ENCODE measurements at regions of chr19 and their contacts with region 1.

Region 1: GRCh38 chr19:38647368-38647965 is at the start of gene ACTN4:
- DNase-seq: peak; percentile 97 to 99 (median 98)
- ATAC-seq: peak; percentile 88
- H3K4me3 ChIP-seq: peak within 1 kb of the TSS; percentile 99
- H3K27ac ChIP-seq: peak within 1 kb of the TSS; percentile 83
- H3K4me1 ChIP-seq: peaks cover 27 to 34% of the 10 kb centered on the region in 2 experiments; a peak in 4 of 5 replicates
- H3K27me3 ChIP-seq: no peaks in the 10 kb centered on the region
- CTCF ChIP-seq: no peak
- EP300 ChIP-seq: no peak
- POLR2A ChIP-seq: peak; percentile 93
- RAD21 ChIP-seq: peak in 1 of 2 experiments; percentile 18; a peak in 2 of 4 replicates
- polyA plus RNA-seq, gene ACTN4: 3.1 to 8.4 TPM

Region 2: DNA sequence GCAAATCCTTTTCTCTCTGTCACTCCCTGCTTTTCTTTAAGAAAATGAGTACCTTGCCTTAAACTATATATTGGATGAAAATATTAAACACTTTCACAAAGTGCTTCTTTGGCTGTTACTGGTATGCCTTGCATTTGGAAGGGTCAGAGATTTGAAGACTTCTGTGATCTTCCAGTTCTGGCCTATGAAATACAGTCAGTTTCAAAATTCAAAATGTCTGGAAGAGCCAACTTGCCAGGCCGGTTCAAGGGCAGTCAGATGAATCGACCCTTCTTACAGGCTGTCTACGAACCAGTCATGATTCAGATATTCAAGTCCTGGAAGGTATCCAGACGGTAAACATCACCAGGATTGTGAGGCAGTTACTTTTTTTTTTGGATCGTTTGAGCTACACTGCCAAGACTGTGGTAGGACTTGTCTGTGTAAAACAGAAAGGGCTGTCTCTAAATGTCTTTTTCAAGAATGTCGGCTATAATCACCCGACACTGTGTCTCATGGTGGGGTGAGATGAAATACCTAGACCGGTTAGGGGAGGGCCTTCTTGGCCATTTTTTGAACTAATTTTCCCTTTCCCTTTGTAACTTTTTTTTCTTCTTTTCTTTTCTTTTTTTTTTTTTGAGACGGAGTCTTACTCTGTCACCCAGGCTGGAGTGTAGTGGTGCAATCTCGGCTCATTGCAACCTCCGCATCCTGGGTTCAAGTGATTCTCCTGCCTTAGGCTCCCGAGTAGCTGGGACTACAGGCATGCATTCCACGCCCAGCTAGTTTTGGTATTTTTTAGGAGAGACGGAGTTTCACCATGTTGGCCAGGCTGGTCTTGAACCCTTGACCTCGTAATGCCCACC is 11.2 kb after region 1 on chr19:
- CTCF ChIA-PET with region 1: no interaction called
- POLR2A ChIA-PET with region 1: interaction called, 17 read pairs
- in situ Hi-C with region 1: no loop called
- intact Hi-C with region 1: no loop called
- DNase-seq: no peak
- ATAC-seq: peak; percentile 21; the same call in 1 of the 3 replicates
- H3K4me3 ChIP-seq: no peak overlapping the region
- H3K27ac ChIP-seq: peak overlapping the region; percentile 31; the same call in 2 of the 3 replicates
- H3K4me1 ChIP-seq: peaks cover 14 to 56% of the 10 kb centered on the region in 2 experiments
- H3K27me3 ChIP-seq: no peaks in the 10 kb centered on the region
- CTCF ChIP-seq: no peak
- EP300 ChIP-seq: no peak
- POLR2A ChIP-seq: no peak
- RAD21 ChIP-seq: no peak

Region 3: DNA sequence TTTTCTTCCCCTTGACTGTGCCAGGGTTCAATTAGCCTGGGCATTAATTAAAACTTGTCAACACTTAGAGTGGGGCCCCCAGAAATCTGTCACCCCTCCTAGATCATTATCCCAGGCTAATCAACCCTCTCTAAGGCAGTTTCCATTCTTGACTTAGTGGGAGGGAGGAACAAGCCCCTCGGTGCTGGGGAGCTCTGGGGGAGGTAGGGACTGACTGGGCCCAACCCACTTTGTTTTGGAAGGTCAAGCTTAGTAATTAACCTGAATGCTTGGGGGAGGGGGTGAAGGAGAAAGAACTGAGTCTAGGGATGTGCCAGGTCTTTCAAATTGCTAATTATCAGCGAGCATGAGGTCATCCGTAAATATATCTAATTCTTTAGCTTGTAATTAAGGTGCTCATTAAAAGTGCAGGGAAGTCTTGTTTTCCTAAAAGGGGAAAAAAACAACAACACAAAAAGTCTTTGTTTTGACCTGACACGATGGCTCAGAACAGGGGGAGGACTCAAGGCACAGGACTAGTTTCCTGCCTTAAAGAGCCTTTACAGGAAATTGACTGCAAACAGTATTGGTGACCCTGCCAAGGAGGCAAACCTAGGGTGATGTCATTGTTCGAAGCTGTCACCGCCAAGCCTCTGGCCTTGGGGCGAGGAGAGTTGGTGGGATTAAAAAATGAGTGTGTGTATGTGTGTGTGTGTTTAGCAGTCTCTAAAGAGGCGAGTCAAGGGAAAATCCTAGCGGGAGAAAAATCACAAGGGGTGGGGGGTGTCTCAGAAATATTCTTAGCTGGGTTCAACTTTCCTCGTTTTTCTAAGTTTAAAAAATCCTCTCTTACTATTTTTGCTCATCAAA is 19.4 kb after region 1 on chr19:
- CTCF ChIA-PET with region 1: no interaction called
- POLR2A ChIA-PET with region 1: interaction called, 20 read pairs
- in situ Hi-C with region 1: no loop called
- intact Hi-C with region 1: no loop called
- DNase-seq: no peak
- ATAC-seq: no peak
- H3K4me3 ChIP-seq: no peak overlapping the region
- H3K27ac ChIP-seq: peak overlapping the region; percentile 35
- H3K4me1 ChIP-seq: peaks cover 61 to 90% of the 10 kb centered on the region in 2 experiments
- H3K27me3 ChIP-seq: no peaks in the 10 kb centered on the region
- CTCF ChIP-seq: no peak
- EP300 ChIP-seq: no peak
- POLR2A ChIP-seq: no peak
- RAD21 ChIP-seq: no peak

Region 4: DNA sequence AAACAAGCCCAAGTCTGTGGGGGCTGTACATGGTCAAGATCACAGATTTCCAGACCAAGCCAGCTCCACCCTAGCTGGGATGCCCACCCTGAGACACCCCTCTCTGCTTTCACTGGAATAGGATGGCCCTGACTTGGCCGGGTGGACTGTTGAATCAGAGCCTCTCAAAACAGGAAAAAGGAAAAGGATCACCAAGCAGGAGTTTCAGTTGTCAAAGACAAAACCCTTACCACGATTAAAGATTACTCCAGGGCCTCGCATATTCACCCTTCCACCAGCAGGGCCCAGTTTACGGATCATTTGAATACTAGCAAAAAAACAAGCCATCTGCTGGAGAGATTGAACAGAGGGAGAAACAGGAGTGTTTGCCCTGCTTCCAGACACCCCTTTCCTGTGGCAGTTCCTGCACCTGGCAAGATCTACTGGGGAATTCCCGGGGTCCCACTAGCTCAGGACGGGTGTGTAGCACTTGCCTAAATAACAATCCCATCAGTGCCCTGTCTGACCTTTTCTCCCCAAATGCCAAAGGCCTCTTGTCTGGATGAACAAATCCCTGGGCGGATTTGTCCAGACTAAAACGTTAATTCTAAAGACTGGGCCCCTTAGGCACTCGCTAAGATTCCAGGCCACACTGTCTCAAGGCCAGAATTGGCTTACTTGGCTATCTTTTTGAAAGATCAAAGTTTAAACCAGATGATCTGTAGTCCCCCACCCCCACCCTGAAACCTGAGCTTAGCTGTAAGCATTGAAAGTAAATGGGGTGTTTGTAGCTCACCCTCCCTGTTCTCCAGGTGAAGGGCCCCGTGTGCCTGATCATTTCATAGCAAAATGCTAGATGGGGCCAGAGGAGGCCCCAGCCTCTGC is 38.4 kb after region 1 on chr19:
- CTCF ChIA-PET with region 1: no interaction called
- POLR2A ChIA-PET with region 1: no interaction called
- in situ Hi-C with region 1: no loop called
- intact Hi-C with region 1: loop called (anchors 5 kb)
- DNase-seq: peak in 3 of 4 experiments; percentile 24 to 57 (median 44)
- ATAC-seq: peak; percentile 59
- H3K4me3 ChIP-seq: no peak overlapping the region
- H3K27ac ChIP-seq: peak overlapping the region; percentile 98
- H3K4me1 ChIP-seq: peaks cover 76 to 80% of the 10 kb centered on the region in 2 experiments
- H3K27me3 ChIP-seq: no peaks in the 10 kb centered on the region
- CTCF ChIP-seq: peak; percentile 60 to 96 (median 60)
- EP300 ChIP-seq: no peak
- POLR2A ChIP-seq: no peak
- RAD21 ChIP-seq: 0 out of 4 replicates have a peak, but pooled peaks of 1 of the 2 experiments have one; percentile 10

Measured in K562 (cell line).